ENCODE measurements at regions of chr20 and their contacts with region 1.

Region 1: GRCh38 chr20:31236953-31237352 is 20.5 kb upstream of the DEFB115 start:
- DNase-seq: no peak
- H3K4me3 ChIP-seq: no peak overlapping the region
- H3K27ac ChIP-seq: no peak overlapping the region
- H3K4me1 ChIP-seq: no peaks in the 10 kb centered on the region
- H3K27me3 ChIP-seq: no peaks in the 10 kb centered on the region
- CTCF ChIP-seq: no peak
- EP300 ChIP-seq: no peak
- POLR2A ChIP-seq: no peak

Region 2: GRCh38 chr20:31278178-31278577 is 41.2 kb after region 1 on chr20:
- intact Hi-C with region 1: loop called (anchors 5 kb)
- DNase-seq: no peak
- H3K4me3 ChIP-seq: no peak overlapping the region
- H3K27ac ChIP-seq: no peak overlapping the region
- H3K4me1 ChIP-seq: no peaks in the 10 kb centered on the region
- H3K27me3 ChIP-seq: no peaks in the 10 kb centered on the region
- CTCF ChIP-seq: no peak
- EP300 ChIP-seq: no peak
- POLR2A ChIP-seq: no peak

Measured in sigmoid colon (tissue), 7 donors.